Activated CD8-positive, alpha-beta memory T cell treated with anti-CD3 and anti-CD28 coated beads, Interleukin-2, amount 10 ng/mL, durations not matched to agents 7 days and 5 days (primary cell): ENCODE measurements at regions of chr2 and their contacts with region 1.

Region 1: DNA sequence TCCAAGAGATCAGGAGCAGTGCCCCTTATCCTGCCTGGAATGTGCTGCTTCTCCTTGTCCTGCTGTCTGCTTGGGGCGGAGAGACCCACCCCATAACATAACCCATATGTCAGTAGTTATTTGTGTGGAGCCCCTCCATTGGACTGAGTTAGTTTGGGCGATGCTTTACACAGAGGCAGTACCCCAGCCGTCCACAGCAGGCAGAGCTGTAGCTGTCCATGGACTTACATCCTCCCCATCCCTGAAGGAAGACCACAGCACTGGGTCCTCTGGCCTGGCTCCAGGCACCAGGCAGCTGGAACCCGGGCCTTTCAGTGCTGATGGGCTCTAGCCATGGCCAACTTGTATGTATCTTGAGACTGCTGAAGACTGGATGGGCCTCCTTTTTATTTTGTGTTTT is 20.3 kb downstream of the GKN2 start:
- DNase-seq: no peak
- ATAC-seq: no peak
- H3K4me3 Mint-ChIP-seq: no peak overlapping the region
- H3K27ac Mint-ChIP-seq: no peak overlapping the region
- H3K4me1 Mint-ChIP-seq: no peaks in the 10 kb centered on the region
- H3K27me3 Mint-ChIP-seq: peaks cover 45% of the 10 kb centered on the region

Region 2: DNA sequence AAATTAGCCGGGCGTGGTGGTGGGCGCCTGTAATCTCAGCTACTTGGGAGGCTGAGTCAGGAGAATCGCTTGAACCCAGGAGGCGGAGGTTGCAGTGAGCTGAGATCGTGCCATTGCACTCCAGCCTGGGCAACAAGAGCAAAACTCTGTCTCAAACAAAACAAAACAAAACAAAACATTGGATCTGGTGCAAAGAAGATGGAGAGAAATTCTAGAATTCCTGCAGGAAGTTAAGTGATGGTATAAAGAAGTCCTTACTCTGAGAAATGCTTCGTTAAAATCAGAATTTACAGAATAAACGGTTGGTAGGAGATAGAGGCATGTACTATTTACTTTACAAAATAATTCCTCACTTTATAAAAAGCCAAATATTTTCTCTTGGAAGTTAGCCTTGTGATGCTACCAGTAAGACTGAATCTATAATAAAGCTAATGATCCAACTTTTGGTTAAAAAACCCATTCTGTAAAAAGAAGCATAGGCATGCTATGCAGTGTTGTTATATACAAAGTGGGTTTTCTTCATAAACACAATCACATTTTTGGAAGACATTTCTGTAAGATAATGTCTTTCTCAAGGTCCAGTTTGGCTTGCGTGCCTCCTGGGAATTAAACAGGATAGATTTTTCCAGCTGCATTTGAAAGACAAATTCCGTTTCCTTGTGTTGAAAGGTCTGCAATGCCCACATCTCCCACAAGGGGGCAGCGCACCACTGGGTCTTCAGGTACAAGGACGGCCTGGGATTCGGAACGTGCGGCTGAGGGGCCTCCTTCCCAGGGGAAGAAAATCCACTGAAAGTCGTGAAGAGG is 810.3 kb before region 1 on chr2:
- CTCF ChIA-PET with region 1: no interaction called
- DNase-seq: peak; percentile 78
- ATAC-seq: peak; percentile 27
- H3K4me3 Mint-ChIP-seq: no peak overlapping the region
- H3K27ac Mint-ChIP-seq: no peak overlapping the region
- H3K4me1 Mint-ChIP-seq: peaks cover 4% of the 10 kb centered on the region
- H3K27me3 Mint-ChIP-seq: peaks cover 6% of the 10 kb centered on the region

Region 3: GRCh38 chr2:68943581-68944568 is 11.5 kb after region 1 on chr2:
- CTCF ChIA-PET with region 1: interaction called, 28 read pairs
- DNase-seq: peak; percentile 63
- ATAC-seq: peak; percentile 60
- H3K4me3 Mint-ChIP-seq: no peak overlapping the region
- H3K27ac Mint-ChIP-seq: no peak overlapping the region
- H3K4me1 Mint-ChIP-seq: peaks cover 8% of the 10 kb centered on the region
- H3K27me3 Mint-ChIP-seq: peaks cover 66% of the 10 kb centered on the region